Right cardiac atrium (tissue), 5 donors: ENCODE measurements at regions of chr1 and their contacts with region 1.

Region 1: GRCh38 chr1:230310381-230311163 is 115.6 kb downstream of the PGBD5 start:
- DNase-seq: peak; percentile 78 to 92 (median 86)
- ATAC-seq: peak; percentile 86 to 88
- H3K4me3 ChIP-seq: no peak overlapping the region
- H3K27ac ChIP-seq: no peak overlapping the region
- H3K4me1 ChIP-seq: no peaks in the 10 kb centered on the region
- H3K27me3 ChIP-seq: no peaks in the 10 kb centered on the region

Region 2: GRCh38 chr1:229661022-229661877 is 649.3 kb before region 1 on chr1:
- intact Hi-C with region 1: loop called (anchors 2 to 10 kb)
- DNase-seq: peak; percentile 79 to 93 (median 90)
- ATAC-seq: peak; percentile 87 to 92
- H3K4me3 ChIP-seq: no peak overlapping the region
- H3K27ac ChIP-seq: no peak overlapping the region
- H3K4me1 ChIP-seq: peaks cover 3% of the 10 kb centered on the region
- H3K27me3 ChIP-seq: no peaks in the 10 kb centered on the region

Region 3: DNA sequence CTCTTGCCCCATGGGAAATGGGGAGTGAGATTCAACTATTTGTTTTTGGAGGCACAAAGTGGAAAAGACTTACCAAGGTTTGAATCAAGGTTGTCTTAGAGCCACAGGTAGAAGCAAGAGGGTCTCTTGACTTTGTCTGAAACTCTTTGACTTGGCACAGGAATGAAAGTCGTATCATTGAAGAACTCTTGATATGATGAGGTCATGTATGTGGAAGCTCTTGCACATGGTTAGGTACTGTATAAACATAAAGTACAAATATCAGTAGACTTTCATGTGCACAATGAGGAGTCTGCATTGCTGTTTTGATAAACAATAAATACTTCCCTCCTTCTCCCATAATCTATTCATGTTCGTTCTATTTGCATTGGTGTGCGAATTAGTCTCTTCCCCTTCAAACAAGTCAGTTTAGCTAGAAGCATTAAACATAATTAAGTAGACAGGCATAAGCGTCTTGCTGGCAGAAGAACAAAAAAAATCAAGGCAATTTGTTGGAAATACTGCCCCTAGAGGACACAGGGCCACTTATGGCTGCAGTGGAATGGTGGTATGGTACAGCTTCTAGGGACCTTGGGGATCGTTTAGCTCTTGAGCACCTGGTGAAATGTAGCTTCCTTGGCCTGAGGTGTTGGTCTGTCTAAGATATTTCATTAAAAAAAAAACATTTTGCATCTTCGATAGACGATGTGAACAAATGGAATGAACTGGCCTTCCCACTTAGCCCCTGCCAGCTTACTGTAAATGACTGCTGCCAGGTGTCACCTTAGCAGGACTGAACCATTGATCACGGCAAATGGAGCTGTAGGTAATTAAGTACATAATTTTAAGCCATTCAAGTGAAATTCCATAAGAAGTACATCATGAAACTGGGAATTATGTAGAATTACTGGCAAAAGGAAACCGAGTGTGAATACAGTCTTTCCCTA is 461.6 kb before region 1 on chr1:
- intact Hi-C with region 1: loop called in 1 of 4 experiments (anchors 10 kb)
- DNase-seq: no peak
- ATAC-seq: no peak
- H3K4me3 ChIP-seq: no peak overlapping the region
- H3K27ac ChIP-seq: no peak overlapping the region
- H3K4me1 ChIP-seq: peaks cover 4% of the 10 kb centered on the region
- H3K27me3 ChIP-seq: no peaks in the 10 kb centered on the region

Region 4: DNA sequence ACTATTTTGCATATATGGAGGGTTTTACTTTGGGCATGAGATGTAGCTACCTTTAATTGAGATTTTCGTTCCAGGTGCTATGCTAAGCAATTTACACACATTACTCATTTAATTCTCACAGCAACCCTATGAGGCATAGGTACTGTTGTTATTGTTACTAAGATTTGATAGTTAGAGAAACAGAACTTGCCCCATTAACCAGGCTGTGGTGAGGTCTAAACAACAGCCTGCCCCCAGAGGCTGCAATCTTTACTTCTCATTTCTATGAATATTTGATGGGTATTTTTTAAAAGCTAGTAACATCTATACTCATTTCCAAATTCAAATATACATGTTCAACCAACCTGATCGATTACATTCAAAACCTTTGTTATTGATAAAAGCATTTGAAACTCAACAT is 87.9 kb before region 1 on chr1:
- intact Hi-C with region 1: loop called in 1 of 4 experiments (anchors 10 kb)
- DNase-seq: no peak
- ATAC-seq: no peak
- H3K4me3 ChIP-seq: peak overlapping the region; percentile 13
- H3K27ac ChIP-seq: no peak overlapping the region
- H3K4me1 ChIP-seq: peaks cover 7% of the 10 kb centered on the region
- H3K27me3 ChIP-seq: no peaks in the 10 kb centered on the region